Endothelial cell of umbilical vein (primary cell): ENCODE measurements at regions of chr6 and their contacts with region 1.

Region 1: DNA sequence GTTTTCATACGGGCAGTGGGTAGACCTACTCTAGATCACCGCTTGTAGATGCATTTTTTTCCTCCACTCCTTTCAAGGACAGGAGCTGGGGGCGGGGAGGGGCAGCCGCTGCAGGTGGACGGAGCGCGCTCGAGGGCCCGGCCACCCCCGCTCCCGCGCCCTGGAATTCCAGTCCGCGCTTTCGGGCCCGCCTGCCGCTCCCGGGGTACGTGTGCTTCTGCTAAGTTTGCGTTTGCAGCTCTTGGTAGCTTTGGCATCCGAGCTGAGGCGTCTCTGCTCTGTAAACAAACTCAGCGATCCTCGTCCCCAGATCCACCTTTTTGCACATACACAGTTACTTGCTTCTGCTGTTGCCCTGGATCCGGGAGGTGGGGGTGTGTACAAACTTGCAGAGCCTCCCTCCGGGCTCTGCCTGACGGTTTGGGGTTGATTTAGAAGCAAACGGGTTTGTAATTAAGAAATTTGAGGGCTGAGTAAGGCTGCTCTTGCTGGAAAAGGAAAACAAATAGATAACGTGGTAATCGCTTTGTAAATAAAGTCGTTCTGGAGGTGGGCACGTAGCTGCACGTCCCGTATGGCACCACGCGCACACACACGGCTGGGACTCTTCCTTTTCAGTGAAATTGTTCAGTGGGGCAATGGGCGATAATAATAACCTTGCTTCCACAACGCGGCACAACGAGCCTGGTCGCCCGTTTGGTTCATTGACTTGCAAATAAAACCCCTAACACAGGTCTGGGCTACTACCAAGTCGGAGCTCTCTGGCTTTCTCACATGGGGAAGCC is 976 bp upstream of the CITED2 start:
- DNase-seq: peak; percentile 94
- H3K4me3 ChIP-seq: peak overlapping the region; percentile 57 to 93 (median 62)
- H3K27ac ChIP-seq: peak overlapping the region; percentile 89
- H3K4me1 ChIP-seq: peaks cover 24% of the 10 kb centered on the region
- H3K27me3 ChIP-seq: no peaks in the 10 kb centered on the region
- CTCF ChIP-seq: no peak
- POLR2A ChIP-seq: no peak

Region 2: GRCh38 chr6:139219271-139219729 is 156.1 kb before region 1 on chr6:
- CTCF ChIA-PET with region 1: interaction called, 11 read pairs
- POLR2A ChIA-PET with region 1: no interaction called
- dilution Hi-C with region 1: no loop called
- intact Hi-C with region 1: no loop called
- DNase-seq: peak; percentile 83
- H3K4me3 ChIP-seq: no peak overlapping the region
- H3K27ac ChIP-seq: no peak overlapping the region
- H3K4me1 ChIP-seq: peaks cover 3% of the 10 kb centered on the region
- H3K27me3 ChIP-seq: no peaks in the 10 kb centered on the region
- CTCF ChIP-seq: peak; percentile 68 to 84
- POLR2A ChIP-seq: no peak

Region 3: GRCh38 chr6:139539852-139540251 is 164.4 kb after region 1 on chr6:
- CTCF ChIA-PET with region 1: interaction called, 3 read pairs
- POLR2A ChIA-PET with region 1: interaction called, 12 read pairs
- dilution Hi-C with region 1: no loop called
- intact Hi-C with region 1: loop called (anchors 2 kb)
- DNase-seq: peak; percentile 13
- H3K4me3 ChIP-seq: no peak overlapping the region
- H3K27ac ChIP-seq: peak overlapping the region; percentile 24
- H3K4me1 ChIP-seq: peaks cover 29% of the 10 kb centered on the region
- H3K27me3 ChIP-seq: no peaks in the 10 kb centered on the region
- CTCF ChIP-seq: no peak
- POLR2A ChIP-seq: no peak

Region 4: DNA sequence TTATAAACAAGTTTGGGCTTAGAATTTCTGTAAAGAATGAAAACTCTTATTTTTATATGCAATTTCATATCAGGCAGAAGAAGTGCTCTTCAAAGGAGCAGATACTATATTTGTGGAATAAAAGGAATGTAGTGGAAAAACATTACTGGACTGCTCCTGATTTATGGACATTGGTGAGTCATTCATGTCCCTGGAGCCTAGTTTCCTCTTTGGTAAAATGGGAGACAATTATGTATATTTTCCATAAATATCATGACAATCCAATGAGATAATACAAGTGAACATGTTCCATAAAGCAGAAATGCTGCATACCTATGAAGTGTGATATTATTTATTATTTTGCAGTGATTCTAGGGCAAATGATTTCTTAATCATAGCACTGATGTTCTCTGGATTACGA is 444.8 kb after region 1 on chr6:
- CTCF ChIA-PET with region 1: interaction called, 4 read pairs
- POLR2A ChIA-PET with region 1: no interaction called
- dilution Hi-C with region 1: no loop called
- intact Hi-C with region 1: loop called (anchors 1 kb)
- DNase-seq: peak; percentile 92
- H3K4me3 ChIP-seq: no peak overlapping the region
- H3K27ac ChIP-seq: peak overlapping the region; percentile 90
- H3K4me1 ChIP-seq: peaks cover 26% of the 10 kb centered on the region
- H3K27me3 ChIP-seq: no peaks in the 10 kb centered on the region
- CTCF ChIP-seq: no peak
- POLR2A ChIP-seq: no peak

Region 5: DNA sequence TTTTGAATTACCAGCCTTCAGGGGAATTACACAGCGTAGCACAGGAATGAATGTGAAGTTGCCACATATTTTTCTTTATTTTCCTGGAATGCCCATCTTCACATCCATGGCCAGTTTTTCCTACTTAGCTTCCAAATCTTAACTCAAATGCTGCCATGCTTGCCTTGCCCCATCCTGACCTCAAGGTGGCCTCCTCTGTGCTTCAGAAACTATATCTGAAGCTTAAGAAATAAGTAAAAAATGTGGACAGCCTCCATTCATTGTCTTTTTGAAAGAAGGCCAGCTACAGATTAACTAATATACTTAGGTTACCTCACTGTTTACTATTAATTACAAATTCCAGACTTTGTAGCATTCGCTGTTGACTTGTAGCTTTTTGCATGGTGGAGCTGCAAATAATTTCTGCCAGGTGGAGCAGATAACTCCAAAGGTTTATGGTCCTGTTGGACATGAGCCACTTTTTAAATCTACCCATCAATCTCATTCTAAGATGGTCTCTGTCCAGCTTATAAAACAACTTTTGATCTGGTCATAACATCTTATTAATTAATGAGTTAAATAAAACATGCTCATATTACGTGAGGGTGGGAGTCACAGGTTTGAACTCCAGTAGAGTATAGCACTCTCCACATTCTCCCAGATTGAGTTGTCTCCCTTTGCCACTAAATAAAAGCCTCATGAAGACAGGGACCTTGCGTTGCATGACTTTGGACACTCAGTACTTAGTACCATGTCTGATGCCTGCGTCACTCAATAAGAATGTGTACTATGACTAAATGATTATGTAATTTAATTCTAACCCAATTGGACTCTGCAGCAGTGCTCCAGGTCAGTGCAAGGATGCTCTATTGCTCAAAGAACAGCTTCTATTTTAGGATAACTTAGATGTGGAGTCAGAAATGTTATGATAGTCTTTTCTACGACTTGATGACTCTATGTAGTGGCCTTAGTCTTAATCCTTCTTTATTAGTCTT is 677.6 kb after region 1 on chr6:
- CTCF ChIA-PET with region 1: interaction called, 20 read pairs
- POLR2A ChIA-PET with region 1: interaction called, 17 read pairs
- dilution Hi-C with region 1: no loop called
- intact Hi-C with region 1: loop called (anchors 1 kb)
- DNase-seq: peak; percentile 26
- H3K4me3 ChIP-seq: no peak overlapping the region
- H3K27ac ChIP-seq: no peak overlapping the region
- H3K4me1 ChIP-seq: peaks cover 7% of the 10 kb centered on the region
- H3K27me3 ChIP-seq: no peaks in the 10 kb centered on the region
- CTCF ChIP-seq: peak; percentile 16 to 31
- POLR2A ChIP-seq: no peak

Region 6: GRCh38 chr6:140344142-140344913 is 968.9 kb after region 1 on chr6:
- CTCF ChIA-PET with region 1: interaction called, 26 read pairs
- POLR2A ChIA-PET with region 1: interaction called, 17 read pairs
- dilution Hi-C with region 1: no loop called
- intact Hi-C with region 1: loop called (anchors 1 kb)
- DNase-seq: peak; percentile 70
- H3K4me3 ChIP-seq: no peak overlapping the region
- H3K27ac ChIP-seq: peak overlapping the region; percentile 77
- H3K4me1 ChIP-seq: peaks cover 40% of the 10 kb centered on the region
- H3K27me3 ChIP-seq: no peaks in the 10 kb centered on the region
- CTCF ChIP-seq: no peak
- POLR2A ChIP-seq: peak; percentile 39

Region 7: DNA sequence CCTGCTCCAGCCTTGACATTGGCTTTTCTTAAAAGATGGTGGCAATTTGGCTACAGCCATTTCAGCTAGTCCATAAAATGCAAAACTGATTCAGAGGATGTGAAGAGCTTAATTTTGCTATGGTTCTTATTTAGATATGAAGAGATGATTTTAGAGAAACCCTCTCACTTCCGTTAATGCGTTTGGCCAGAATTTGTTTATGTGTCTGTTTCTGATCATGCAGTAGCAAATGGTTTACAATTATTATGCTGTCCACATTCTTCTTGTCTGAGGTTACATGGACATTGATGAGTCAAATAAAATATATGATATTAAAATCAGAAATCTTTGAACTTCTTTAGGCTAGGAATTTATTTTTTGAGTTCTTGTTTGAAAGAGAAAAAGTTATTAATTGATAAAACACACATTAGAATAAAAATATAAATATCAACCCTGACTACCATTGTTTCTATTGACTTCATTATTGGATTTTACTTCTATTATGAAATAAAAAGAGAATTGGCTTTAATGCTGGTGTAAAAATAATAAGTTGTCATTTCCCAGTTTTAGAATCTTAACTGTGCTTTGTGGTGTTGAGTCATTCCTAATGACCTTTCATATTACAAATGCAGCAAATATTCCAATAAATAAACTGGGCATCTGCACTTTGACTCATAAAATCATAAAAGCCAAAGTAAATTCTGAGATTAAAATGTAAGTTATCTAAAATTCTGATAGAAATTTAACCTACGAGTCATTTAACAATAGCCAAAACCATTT is 1471.3 kb after region 1 on chr6:
- CTCF ChIA-PET with region 1: no interaction called
- POLR2A ChIA-PET with region 1: no interaction called
- dilution Hi-C with region 1: no loop called
- intact Hi-C with region 1: loop called (anchors 5 kb)
- DNase-seq: peak; percentile 64
- H3K4me3 ChIP-seq: no peak overlapping the region
- H3K27ac ChIP-seq: peak overlapping the region; percentile 78
- H3K4me1 ChIP-seq: peaks cover 47% of the 10 kb centered on the region
- H3K27me3 ChIP-seq: no peaks in the 10 kb centered on the region
- CTCF ChIP-seq: no peak
- POLR2A ChIP-seq: no peak